Activated T-helper 2 cell treated with anti-CD3 and anti-CD28 coated beads, Interferon-gamma antibody, Interleukin-2, Interleukin-4, amounts not matched to agents 10 μg/mL and 5 μg/mL and 100 μg/mL, durations not matched to agents 14 hours and 24 hours and 36 hours (primary cell): ENCODE measurements at regions of chr1 and their contacts with region 1.

Region 1: DNA sequence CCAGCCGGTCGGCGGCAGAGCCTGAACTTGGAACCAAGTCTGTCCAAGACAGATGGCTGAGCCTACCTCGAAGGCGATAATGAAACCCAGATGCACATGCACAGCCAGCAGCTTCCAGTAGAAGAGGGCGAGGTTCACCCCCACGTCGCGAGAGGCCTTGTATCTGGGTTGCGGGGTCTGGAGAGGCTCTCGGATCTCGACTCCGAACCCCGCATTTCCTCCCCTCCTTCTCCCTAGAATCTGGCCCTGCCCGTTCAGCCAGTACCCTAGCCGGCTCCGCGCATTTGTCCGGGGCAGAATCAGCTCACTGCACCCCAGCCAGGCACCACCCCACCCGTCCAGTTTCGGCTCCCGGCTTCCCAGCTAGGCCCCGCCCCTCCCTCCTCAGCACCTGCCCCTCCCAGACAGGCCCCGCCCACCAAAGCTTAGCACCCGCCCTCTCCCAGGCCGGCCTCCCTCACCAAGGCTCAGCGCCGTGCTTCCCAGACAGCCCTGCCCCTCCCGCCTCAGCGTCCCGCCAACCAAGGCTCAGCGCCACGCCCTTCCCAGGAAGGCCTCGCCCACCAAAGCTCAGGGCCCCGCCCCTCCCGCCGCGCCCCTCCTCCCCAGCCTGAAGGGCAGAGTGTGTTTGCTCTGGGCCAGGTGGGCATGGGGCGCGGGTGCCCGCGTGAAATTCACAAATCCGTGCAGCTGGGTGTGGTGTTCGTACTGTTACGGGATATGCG is 4.8 kb upstream of the ARHGEF19 start:
- DNase-seq: peak; percentile 92
- H3K4me3 Mint-ChIP-seq: peak overlapping the region; percentile 80
- H3K27ac Mint-ChIP-seq: no peak overlapping the region
- H3K4me1 Mint-ChIP-seq: peaks cover 14% of the 10 kb centered on the region
- H3K27me3 Mint-ChIP-seq: peaks cover 8% of the 10 kb centered on the region

Region 2: GRCh38 chr1:16236511-16237342 is 19.5 kb after region 1 on chr1 and contains the start of gene CPLANE2:
- intact Hi-C with region 1: loop called (anchors 2 kb)
- DNase-seq: peak; percentile 95
- H3K4me3 Mint-ChIP-seq: peak within 1 kb of the TSS; percentile 86
- H3K27ac Mint-ChIP-seq: peak within 1 kb of the TSS; percentile 80
- H3K4me1 Mint-ChIP-seq: peaks cover 18% of the 10 kb centered on the region
- H3K27me3 Mint-ChIP-seq: no peaks in the 10 kb centered on the region
- total RNA-seq, gene CPLANE2: 3.2 and 3.9 TPM in 2 replicates